Head of caudate nucleus (tissue), 42 donors: ENCODE measurements at regions of chr5 and their contacts with region 1.

Region 1: DNA sequence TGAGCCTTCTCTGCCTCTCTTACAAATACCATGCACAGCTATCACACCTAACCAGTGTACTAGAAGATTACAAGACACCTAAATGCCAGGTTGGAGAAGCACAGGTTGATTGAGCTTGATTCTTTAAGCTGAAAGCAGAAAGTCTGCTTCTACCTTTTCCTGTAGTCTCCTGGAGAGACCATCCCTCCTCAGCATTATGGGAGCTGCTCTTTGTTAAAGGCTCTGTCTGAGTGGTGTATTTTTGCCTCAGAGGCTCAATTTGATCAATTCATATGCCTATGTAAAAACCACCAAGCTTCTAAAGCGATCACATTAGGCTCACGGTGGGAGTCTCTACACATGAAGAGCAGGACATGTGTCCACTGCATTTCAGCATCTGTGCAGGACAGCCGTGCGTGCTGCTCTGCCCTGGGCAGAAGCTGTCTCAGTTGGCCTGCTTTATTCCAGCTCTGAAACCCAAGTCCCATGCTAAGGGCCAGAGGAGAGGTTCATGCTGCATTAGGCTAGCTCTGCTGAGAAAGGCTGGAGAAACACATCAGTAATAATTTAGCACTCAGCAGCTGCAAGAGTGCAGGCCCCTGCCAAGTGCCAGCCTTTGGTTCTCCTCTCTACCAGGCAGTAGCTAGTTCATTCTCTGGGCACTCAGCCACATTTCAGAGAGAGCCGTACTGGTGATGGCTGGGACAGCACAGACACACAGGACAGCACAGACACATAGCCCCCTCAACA is 41.7 kb downstream of the TMEM167A start:
- DNase-seq: peak; percentile 67 to 98 (median 93)

Region 2: GRCh38 chr5:83076742-83077661 is 41.5 kb after region 1 on chr5 and contains the starts of genes TMEM167A and XRCC4:
- intact Hi-C with region 1: loop called (anchors 5 kb)
- DNase-seq: peak; percentile 92 to 99 (median 98)